ENCODE measurements at regions of chr7 and their contacts with region 1.

Region 1: DNA sequence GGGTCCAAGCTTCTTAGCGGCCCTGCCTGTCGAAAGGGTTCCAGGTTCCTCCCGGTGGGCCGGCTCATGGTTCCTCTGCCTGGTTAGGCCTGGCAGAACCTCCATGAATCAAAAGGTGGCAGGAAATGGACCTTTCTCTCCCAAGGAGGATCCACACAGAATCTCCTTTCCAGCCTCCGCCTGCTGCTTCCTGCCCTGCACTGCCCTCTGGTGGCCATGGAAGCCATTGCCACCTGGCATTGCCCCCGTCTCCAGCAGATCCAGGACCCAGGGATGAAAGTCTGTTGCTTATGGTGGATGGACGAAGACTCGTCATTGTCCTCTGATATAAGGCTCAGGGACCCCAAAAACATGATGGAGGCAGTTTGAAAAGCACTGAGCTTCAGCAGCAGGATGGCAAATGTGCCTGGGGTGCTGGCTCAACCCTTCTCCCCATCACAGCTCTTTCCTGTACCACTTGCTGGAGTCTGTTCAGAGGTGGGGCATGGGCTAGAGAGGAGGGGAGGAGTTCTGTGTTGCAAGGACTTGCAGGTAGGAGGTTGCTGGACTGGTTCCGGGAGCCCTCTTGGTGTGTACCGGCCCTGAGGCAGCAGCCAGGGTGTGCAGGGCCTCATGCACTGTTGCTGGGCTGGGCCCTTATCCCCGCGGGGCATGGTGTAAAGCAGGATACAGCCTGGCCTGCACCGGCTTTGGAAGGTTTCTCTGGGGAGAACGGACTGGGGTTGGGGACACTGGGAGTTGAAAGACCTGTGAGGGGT is 11.3 kb upstream of the INMT start:
- DNase-seq: peak; percentile 65
- ATAC-seq: peak; percentile 54
- H3K4me3 ChIP-seq: no peak overlapping the region
- H3K4me3 Mint-ChIP-seq: no peak overlapping the region
- H3K27ac ChIP-seq: no peak overlapping the region
- H3K27ac Mint-ChIP-seq: no peak overlapping the region
- H3K4me1 ChIP-seq: no peaks in the 10 kb centered on the region
- H3K4me1 Mint-ChIP-seq: peaks cover 4% of the 10 kb centered on the region
- H3K27me3 ChIP-seq: peaks cover 0 to 7% (median 0%) of the 10 kb centered on the region in 4 experiments
- H3K27me3 Mint-ChIP-seq: peaks cover 16% of the 10 kb centered on the region
- CTCF ChIP-seq: peak; percentile 99

Region 2: DNA sequence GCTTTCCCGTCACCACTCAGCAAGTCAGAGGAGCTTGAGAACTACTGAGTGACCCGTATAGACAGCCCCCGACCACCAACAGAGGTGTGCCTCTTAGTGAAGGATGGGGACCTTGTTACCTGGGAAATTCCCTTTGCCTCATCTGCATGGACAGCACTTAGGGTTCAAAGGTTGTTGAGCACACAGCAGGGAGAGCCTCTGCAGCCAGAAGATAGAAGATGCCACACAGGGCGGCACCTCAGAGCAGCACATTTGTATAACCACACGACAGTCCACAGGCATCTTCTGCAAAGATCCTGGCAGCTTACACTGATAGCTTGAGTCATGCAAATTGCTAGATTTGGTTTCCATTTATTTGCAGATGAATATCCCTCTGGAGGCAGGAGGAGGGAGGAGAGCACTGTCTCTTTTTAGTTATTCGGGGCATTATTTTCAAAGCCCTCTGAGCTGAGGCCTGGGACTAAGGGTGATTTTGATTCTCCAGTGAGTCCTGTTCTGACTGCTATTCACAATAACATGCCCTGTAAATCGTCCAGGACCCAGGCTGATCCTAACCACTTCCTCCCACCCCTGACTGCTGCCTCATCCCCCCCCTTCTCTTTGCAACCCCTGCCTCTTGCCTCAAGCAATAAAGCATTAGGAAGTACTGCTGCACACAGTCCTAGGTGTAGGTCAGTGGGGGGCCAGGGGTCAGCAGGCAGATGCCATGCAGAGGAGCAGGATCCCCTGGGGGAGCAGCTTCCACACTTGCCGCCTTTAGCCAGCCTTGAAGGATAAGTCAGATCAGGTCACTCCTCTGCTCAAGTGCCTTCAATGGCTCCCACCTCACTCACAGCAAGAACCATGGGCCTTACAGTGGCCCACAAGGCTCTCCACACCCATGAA is 13.3 kb before region 1 on chr7:
- CTCF ChIA-PET with region 1: interaction called, 22 read pairs
- POLR2A ChIA-PET with region 1: no interaction called
- intact Hi-C with region 1: no loop called
- DNase-seq: peak; percentile 32
- ATAC-seq: peak; percentile 66
- H3K4me3 ChIP-seq: peak overlapping the region in 1 of 5 experiments; percentile 15
- H3K4me3 Mint-ChIP-seq: peak overlapping the region; percentile 51
- H3K27ac ChIP-seq: peak overlapping the region in 1 of 2 donors; percentile 2
- H3K27ac Mint-ChIP-seq: no peak overlapping the region
- H3K4me1 ChIP-seq: peaks cover 8 to 18% of the 10 kb centered on the region in 2 donors
- H3K4me1 Mint-ChIP-seq: peaks cover 22% of the 10 kb centered on the region
- H3K27me3 ChIP-seq: peaks cover 0 to 6% (median 0%) of the 10 kb centered on the region in 4 experiments
- H3K27me3 Mint-ChIP-seq: peaks cover 8% of the 10 kb centered on the region
- CTCF ChIP-seq: no peak

Region 3: GRCh38 chr7:30755384-30756154 is 15.0 kb after region 1 on chr7:
- CTCF ChIA-PET with region 1: interaction called, 14 read pairs
- POLR2A ChIA-PET with region 1: no interaction called
- intact Hi-C with region 1: no loop called
- DNase-seq: no peak
- ATAC-seq: no peak
- H3K4me3 ChIP-seq: no peak overlapping the region
- H3K4me3 Mint-ChIP-seq: no peak overlapping the region
- H3K27ac ChIP-seq: no peak overlapping the region
- H3K27ac Mint-ChIP-seq: no peak overlapping the region
- H3K4me1 ChIP-seq: no peaks in the 10 kb centered on the region
- H3K4me1 Mint-ChIP-seq: no peaks in the 10 kb centered on the region
- H3K27me3 ChIP-seq: peaks cover 0 to 12% (median 2%) of the 10 kb centered on the region in 4 experiments
- H3K27me3 Mint-ChIP-seq: peaks cover 19% of the 10 kb centered on the region
- CTCF ChIP-seq: no peak

Measured in B cell (primary cell).